Sciatic nerve (tissue), 2 donors: ENCODE measurements at regions of chr5 and their contacts with region 1.

Region 1: DNA sequence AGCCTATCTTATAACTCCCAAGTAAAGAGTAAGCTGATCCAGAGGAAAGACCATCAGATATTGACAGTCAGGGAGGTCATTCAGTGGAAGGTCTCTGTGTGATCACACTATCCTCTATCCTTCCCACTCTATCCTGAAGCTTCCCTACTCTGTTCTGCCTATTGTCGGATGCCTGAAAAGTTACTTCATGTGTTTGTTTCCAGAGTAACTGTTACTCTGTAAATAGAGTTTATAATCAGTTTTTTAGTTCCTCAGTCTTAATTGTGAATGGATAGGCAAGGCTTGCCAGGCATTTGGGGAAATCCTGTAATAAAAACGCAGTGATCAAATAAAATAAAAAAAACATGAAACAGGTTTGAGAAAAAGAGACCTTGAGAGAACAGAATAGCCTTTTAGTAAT is 79.8 kb downstream of the XRCC4 start:
- DNase-seq: no peak
- ATAC-seq: peak; percentile 32

Region 2: DNA sequence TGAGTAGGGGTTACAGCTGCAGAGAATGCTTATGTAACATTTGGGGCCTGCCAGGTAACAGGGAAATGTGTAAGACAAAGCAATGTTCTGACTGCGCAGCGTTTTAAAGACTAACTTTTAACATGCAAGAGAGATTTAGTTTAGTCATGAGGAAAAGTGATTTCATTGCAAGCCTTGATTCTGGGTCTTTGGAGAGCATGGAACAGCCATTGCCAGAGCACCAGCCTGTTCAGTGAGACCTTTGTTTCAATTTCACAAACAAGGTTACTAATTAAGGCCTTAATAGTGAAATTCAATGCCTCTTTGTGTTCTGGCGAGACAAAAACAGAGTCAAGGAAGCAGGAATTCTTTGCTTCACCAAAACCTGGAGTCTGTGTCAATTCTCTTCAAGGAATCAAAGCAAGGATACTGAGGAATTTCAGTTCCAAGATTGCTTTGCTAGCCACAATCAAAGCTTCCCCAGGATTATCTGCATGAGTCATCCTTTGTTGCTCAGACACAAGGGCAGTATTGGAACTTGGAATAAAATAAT is 1909.7 kb before region 1 on chr5:
- intact Hi-C with region 1: loop called (anchors 5 kb)
- DNase-seq: no peak
- ATAC-seq: peak; percentile 20

Region 3: GRCh38 chr5:83387041-83387440 is 229.9 kb after region 1 on chr5:
- intact Hi-C with region 1: no loop called
- DNase-seq: no peak
- ATAC-seq: no peak